GM13977 (cell line): ENCODE measurements at regions of chr17 and their contacts with region 1.

Region 1: DNA sequence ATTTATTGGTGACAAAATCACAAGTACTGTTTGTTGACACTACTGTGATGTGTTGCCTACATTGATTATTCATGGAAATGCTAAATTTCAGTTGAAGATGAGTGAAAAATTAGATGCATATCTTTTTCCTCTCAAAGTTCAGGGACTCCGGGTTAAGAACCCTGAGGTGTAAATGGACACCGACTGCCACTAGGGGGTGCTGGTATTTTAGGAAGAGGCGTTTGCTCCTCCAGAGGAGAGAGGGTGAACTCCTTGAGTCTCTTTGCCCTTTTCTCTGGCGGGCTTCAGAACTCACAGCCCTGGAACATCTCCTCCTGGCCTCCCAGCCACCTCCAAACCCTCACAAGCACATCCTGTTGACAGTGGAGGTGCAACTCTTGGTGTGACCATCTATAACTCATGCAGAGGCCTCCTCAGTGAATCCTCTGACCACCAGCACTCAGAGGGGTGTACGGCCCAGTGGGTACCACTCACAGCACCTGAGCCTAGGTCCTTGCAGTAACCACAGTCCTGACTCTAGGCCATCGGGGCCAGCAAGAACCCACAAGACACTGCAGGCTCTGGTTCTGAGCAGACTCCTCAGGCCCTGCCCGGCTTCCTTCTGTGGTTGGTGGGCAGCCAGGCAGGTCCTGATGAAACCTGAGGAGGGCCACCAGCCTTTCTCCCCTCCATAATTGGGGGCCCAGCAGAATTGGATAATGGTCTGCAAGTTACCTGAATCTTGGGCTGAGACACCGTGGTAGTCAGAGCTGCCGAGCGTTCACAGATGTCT is 26.2 kb upstream of the PIK3R5 start:
- DNase-seq: peak; percentile 59
- CTCF ChIP-seq: peak; percentile 69

Region 2: DNA sequence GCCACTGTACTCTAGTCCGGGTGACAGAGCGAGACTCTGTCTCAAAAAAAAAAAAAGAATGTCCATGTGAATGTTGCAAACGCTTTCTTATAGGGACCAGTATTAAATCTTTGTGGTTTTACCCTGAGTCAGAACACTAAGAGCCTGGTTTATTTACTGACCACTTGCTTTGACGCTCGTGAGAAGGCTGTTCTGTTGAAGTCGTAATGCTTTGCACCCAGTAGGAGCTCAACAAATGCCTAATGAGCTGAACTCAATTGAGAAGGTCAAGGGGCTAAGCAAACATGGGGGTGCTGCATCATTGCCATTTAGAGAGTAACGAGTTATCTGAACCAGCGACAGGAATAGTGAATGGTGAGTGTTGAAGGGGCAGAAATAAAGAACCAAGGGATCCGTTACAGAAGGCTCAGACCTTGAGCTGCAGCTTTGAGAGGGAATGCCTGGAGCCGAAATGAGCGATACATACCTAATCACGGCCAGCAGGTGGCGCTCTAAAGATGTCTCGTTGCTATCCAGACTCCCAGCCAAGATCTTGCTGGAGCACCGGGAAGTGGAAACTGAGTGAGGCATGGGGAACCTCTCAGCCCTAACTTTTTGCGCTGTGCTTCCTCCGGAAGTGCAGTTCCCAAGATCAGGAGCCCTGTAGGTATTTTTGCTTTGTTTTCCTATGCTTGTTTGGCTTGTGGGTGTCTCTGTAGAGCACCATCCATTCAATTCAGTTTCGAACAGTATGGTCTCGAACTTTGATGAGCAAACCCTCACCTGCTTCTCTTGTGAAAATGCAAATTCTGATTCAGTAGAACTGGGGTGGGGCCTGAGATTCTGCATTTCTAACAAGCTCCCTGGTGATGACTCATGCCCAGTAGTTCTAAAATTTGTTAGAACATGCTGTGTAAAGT is 581.5 kb before region 1 on chr17:
- in situ Hi-C with region 1: loop called (anchors 25 kb)
- DNase-seq: peak; percentile 71
- CTCF ChIP-seq: peak; percentile 88

Region 3: GRCh38 chr17:8753976-8754440 is 237.7 kb before region 1 on chr17:
- in situ Hi-C with region 1: loop called (anchors 10 kb)
- DNase-seq: peak; percentile 67
- CTCF ChIP-seq: peak; percentile 64

Region 4: DNA sequence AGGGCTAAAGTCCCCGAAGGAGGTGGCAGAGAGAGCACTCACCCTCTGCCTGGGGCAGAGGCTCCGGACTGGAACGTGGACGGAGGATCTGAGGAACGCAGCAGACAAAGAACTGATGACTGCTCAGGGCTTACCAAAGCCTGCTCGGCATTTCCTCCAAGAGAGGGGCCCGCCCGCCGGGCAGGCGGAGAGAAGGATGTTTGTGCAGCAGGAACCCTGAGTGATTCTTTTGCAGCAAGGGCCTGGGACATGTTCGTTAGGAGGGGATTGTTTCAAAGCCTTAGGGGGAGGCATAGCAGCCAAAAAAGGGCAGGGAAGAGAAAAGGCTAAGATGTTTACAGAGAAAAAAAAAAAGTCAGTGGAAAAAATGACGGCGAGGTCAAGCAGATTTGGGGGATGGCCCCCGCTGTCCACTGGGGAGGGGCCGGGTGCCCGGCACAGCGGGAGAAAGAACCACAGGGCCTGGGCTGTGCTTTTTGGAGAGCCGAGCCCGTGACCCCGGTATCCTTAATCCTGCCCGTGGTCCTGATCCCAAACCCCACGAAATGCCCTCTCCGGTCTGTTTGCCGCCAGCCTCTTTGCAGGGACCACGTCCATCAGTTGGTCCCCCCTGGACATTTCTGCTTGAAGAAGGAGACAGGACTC is 158.9 kb after region 1 on chr17:
- in situ Hi-C with region 1: no loop called
- DNase-seq: no peak
- CTCF ChIP-seq: no peak

Region 5: GRCh38 chr17:9529033-9529700 is 537.5 kb after region 1 on chr17:
- in situ Hi-C with region 1: loop called (anchors 25 kb)
- DNase-seq: peak; percentile 44
- CTCF ChIP-seq: peak; percentile 56